ENCODE measurements at regions of chr3 and their contacts with region 1.

Region 1: GRCh38 chr3:14170531-14171173 is 7.7 kb downstream of the XPC start:
- DNase-seq: peak; percentile 54
- H3K4me3 ChIP-seq: no peak overlapping the region
- H3K27ac ChIP-seq: peak overlapping the region; percentile 23
- H3K4me1 ChIP-seq: peaks cover 26% of the 10 kb centered on the region
- H3K27me3 ChIP-seq: no peaks in the 10 kb centered on the region
- CTCF ChIP-seq: no peak

Region 2: GRCh38 chr3:14154895-14155440 is 15.7 kb before region 1 on chr3:
- CTCF ChIA-PET with region 1: no interaction called
- dilution Hi-C with region 1: no loop called
- in situ Hi-C with region 1: no loop called
- intact Hi-C with region 1: loop called (anchors 2 kb)
- DNase-seq: no peak
- H3K4me3 ChIP-seq: no peak overlapping the region
- H3K27ac ChIP-seq: no peak overlapping the region
- H3K4me1 ChIP-seq: peaks cover 30% of the 10 kb centered on the region
- H3K27me3 ChIP-seq: no peaks in the 10 kb centered on the region
- CTCF ChIP-seq: no peak

Measured in mammary epithelial cell (primary cell).